HepG2 (cell line): ENCODE measurements at regions of chr11 and their contacts with region 1.

Region 1: GRCh38 chr11:14537134-14537599 is 17.0 kb upstream of the PSMA1 start:
- DNase-seq: peak; percentile 20
- ATAC-seq: peak; percentile 49; the same call in 2 of the 3 replicates
- H3K4me3 ChIP-seq: no peak overlapping the region
- H3K27ac ChIP-seq: peak overlapping the region; percentile 6
- H3K4me1 ChIP-seq: peaks cover 31% of the 10 kb centered on the region
- H3K27me3 ChIP-seq: no peaks in the 10 kb centered on the region
- CTCF ChIP-seq: peak; percentile 63
- EP300 ChIP-seq: no peak
- POLR2A ChIP-seq: no peak
- RAD21 ChIP-seq: peak; percentile 50; the same call in 1 of the 2 replicates

Region 2: GRCh38 chr11:14583252-14584034 is 46.3 kb after region 1 on chr11:
- CTCF ChIA-PET with region 1: no interaction called
- POLR2A ChIA-PET with region 1: interaction called, 3 read pairs
- in situ Hi-C with region 1: no loop called
- intact Hi-C with region 1: loop called (anchors 1 kb)
- DNase-seq: peak; percentile 85
- ATAC-seq: peak; percentile 97
- H3K4me3 ChIP-seq: peak overlapping the region in 1 of 3 experiments; percentile 29; a peak in 1 of 6 replicates
- H3K27ac ChIP-seq: peak overlapping the region; percentile 72
- H3K4me1 ChIP-seq: peaks cover 51% of the 10 kb centered on the region
- H3K27me3 ChIP-seq: no peaks in the 10 kb centered on the region
- CTCF ChIP-seq: no peak
- EP300 ChIP-seq: peak in 1 of 2 experiments; percentile 39; a peak in 1 of 4 replicates
- POLR2A ChIP-seq: peak in 1 of 2 experiments; percentile 47; a peak in 2 of 4 replicates
- RAD21 ChIP-seq: no peak

Region 3: DNA sequence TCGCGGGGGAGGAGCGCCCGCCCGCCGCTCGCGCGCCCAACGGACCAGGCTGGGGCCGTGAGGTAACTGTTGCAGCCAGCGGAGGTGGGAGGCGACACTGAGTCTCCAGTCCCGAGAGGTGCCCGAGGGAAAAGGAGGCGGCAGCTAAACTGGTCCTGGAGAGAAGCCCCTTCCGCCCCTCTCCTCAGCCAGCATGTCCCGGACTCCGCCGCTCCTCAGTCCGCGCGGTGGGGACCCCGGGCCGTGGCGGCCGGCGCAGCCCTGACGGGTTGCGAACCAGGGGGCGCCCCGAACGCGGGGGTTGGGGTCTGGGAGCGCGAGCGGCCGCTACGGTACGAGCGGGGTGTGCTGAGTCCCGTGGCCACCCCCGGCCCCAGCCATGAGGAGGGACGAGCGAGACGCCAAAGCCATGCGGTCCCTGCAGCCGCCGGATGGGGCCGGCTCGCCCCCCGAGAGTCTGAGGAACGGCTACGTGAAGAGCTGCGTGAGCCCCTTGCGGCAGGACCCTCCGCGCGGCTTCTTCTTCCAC is 106.6 kb after region 1 on chr11 and contains the start of gene PDE3B:
- CTCF ChIA-PET with region 1: no interaction called
- POLR2A ChIA-PET with region 1: no interaction called
- in situ Hi-C with region 1: loop called (anchors 25 kb)
- intact Hi-C with region 1: loop called (anchors 1 kb)
- DNase-seq: peak; percentile 83
- ATAC-seq: peak; percentile 91
- H3K4me3 ChIP-seq: peak within 1 kb of the TSS; percentile 96 to 100 (median 99)
- H3K27ac ChIP-seq: peak within 1 kb of the TSS; percentile 92
- H3K4me1 ChIP-seq: peaks cover 51% of the 10 kb centered on the region
- H3K27me3 ChIP-seq: no peaks in the 10 kb centered on the region; a peak in 1 of 5 replicates
- CTCF ChIP-seq: peak; percentile 59
- EP300 ChIP-seq: no peak
- POLR2A ChIP-seq: peak; percentile 86 to 93
- RAD21 ChIP-seq: peak; percentile 56
- total RNA-seq, gene PDE3B: 19.6 and 26.5 TPM in 2 replicates

Region 4: GRCh38 chr11:14789879-14790484 is 252.8 kb after region 1 on chr11:
- CTCF ChIA-PET with region 1: no interaction called
- POLR2A ChIA-PET with region 1: no interaction called
- in situ Hi-C with region 1: no loop called
- intact Hi-C with region 1: loop called (anchors 5 kb)
- DNase-seq: no peak
- ATAC-seq: no peak
- H3K4me3 ChIP-seq: no peak overlapping the region
- H3K27ac ChIP-seq: no peak overlapping the region
- H3K4me1 ChIP-seq: no peaks in the 10 kb centered on the region
- H3K27me3 ChIP-seq: no peaks in the 10 kb centered on the region
- CTCF ChIP-seq: peak; percentile 28
- EP300 ChIP-seq: no peak
- POLR2A ChIP-seq: no peak
- RAD21 ChIP-seq: no peak